Activated T-helper 1 cell treated with anti-CD3 and anti-CD28 coated beads, Interleukin-12 subunit alpha, Interleukin-12 subunit beta, Interleukin-2, Interleukin-4 antibody, amounts not matched to agents 30 ng/mL and 10 ng/mL and 1 ng/mL, durations not matched to agents 14 hours and 24 hours and 36 hours (primary cell): ENCODE measurements at regions of chr18 and their contacts with region 1.

Region 1: DNA sequence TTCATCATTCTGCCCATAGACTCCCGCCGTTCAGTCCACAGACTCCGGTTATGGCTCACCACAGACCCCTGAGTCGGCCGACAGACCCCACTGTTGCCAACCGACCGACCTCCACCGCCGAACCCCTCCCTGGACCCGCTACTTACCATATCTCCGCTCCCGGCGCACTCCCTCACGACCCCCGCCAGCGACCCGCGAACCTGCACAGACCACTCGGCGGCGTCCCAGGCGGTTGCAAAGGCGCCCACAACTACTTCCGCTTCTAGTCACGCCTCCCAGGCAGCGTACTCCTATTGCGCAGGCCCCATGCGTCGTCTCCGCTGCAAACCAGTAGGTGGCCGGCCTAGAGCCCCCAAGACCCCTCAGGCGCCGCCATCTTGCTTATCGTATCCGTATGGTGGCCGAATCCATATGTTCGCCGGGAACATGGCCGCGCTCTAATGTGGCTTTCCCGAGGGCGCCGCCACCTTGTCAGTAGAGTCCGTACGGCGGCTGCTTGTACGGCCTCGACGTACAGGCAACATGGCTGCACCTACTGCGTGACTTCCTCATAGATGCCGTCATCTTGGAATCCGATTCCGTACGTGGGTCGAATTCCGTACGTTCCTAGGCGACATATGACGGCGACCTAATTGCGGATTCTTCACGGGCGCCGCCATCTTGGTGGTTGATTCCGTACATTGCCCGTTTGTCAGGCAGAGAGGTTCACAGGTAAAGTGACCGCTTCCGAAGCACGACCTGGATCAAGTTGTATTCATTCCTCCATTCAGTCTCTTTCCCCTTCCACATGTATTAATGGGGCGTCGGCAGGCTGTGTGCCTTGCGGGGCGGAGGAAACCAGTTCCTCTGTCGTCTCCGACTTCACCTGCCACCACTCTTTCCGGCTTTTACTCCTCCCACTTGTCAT is at the start of gene CXXC1:
- DNase-seq: peak; percentile 95
- H3K4me3 Mint-ChIP-seq: peak within 1 kb of the TSS; percentile 93
- H3K27ac Mint-ChIP-seq: peak within 1 kb of the TSS; percentile 97
- H3K4me1 Mint-ChIP-seq: peaks cover 31% of the 10 kb centered on the region
- H3K27me3 Mint-ChIP-seq: no peaks in the 10 kb centered on the region
- total RNA-seq, gene CXXC1: 114 and 117 TPM in 2 replicates

Region 2: GRCh38 chr18:48951448-48952286 is 1336.0 kb before region 1 on chr18:
- intact Hi-C with region 1: loop called (anchors 10 kb)
- DNase-seq: peak; percentile 68
- H3K4me3 Mint-ChIP-seq: peak overlapping the region; percentile 98
- H3K27ac Mint-ChIP-seq: peak overlapping the region; percentile 96
- H3K4me1 Mint-ChIP-seq: peaks cover 45% of the 10 kb centered on the region
- H3K27me3 Mint-ChIP-seq: peaks cover 14% of the 10 kb centered on the region

Region 3: DNA sequence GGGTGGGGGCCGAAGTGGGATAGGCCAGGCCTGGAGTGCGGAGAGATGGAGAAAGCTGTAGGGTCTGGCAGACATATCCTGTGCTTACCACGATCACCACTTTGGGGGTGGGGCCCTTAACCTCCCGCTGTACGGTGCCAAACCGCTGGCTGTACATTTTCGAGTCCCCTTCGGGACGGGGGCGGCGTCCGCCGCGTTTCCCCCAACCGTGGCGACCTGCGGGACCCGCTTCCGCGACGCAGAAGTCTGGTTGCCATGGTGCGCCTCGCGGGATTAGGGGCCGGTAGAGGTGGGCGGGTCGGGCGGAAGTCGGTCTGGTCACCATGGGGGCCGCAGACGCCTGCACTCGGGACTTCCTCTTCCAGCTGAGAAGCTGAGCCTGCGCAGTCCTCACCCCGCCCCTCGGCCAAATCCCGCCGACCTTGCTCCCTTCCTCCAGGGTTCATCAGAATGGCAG is 21.4 kb before region 1 on chr18 and contains the start of gene CFAP53:
- intact Hi-C with region 1: loop called (anchors 1 kb)
- DNase-seq: peak; percentile 77
- H3K4me3 Mint-ChIP-seq: peak within 1 kb of the TSS; percentile 86
- H3K27ac Mint-ChIP-seq: peak within 1 kb of the TSS; percentile 70
- H3K4me1 Mint-ChIP-seq: peaks cover 30% of the 10 kb centered on the region
- H3K27me3 Mint-ChIP-seq: peaks cover 3% of the 10 kb centered on the region
- total RNA-seq, gene CFAP53: 0.31 and 0.34 TPM in 2 replicates

Region 4: GRCh38 chr18:50307738-50308470 is 20.2 kb after region 1 on chr18:
- intact Hi-C with region 1: loop called (anchors 1 kb)
- DNase-seq: peak; percentile 85
- H3K4me3 Mint-ChIP-seq: peak overlapping the region; percentile 90
- H3K27ac Mint-ChIP-seq: peak overlapping the region; percentile 57
- H3K4me1 Mint-ChIP-seq: peaks cover 18% of the 10 kb centered on the region
- H3K27me3 Mint-ChIP-seq: peaks cover 27% of the 10 kb centered on the region

Region 5: DNA sequence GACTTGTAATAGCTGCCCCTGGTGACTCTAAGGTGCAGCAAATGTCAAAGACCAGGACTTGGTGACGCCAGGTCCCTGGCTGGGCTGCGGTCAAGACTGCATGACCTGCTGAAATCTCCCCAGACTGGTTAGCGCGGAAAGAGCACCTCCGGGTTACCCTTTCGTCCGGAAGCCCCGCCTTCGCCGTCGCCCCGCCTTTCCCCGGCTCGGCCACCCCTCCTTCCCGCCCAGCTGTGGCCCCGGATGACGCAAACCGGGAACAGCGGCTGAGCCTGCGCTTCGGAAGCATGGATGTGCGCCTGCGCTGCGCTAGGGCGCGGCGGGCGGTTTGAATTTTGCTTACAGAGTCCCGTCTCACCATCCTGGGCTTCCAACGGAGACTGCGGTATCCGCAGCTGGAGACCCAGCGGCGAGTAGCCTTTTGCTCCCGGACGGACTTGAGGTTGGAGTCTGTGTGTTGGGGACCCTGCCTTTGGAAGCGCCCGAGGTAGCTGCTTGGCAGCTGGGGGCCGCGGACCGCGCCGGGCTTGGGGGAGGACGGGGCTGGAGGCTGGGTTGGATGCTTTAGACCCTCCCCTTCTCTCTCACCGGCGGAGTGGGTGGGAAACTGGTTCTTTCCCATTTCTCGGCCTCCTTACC is 87.2 kb after region 1 on chr18 and contains the start of gene SKA1:
- intact Hi-C with region 1: loop called (anchors 1 kb)
- DNase-seq: peak; percentile 89
- H3K4me3 Mint-ChIP-seq: peak within 1 kb of the TSS; percentile 91
- H3K27ac Mint-ChIP-seq: peak within 1 kb of the TSS; percentile 81
- H3K4me1 Mint-ChIP-seq: peaks cover 23% of the 10 kb centered on the region
- H3K27me3 Mint-ChIP-seq: peaks cover 2% of the 10 kb centered on the region
- total RNA-seq, gene SKA1: 20.7 and 23.3 TPM in 2 replicates

Region 6: GRCh38 chr18:51029694-51030536 is 742.2 kb after region 1 on chr18 and contains the start of gene SMAD4:
- intact Hi-C with region 1: loop called (anchors 10 kb)
- DNase-seq: peak; percentile 97
- H3K4me3 Mint-ChIP-seq: peak within 1 kb of the TSS; percentile 99
- H3K27ac Mint-ChIP-seq: peak within 1 kb of the TSS; percentile 96
- H3K4me1 Mint-ChIP-seq: peaks cover 55% of the 10 kb centered on the region
- H3K27me3 Mint-ChIP-seq: no peaks in the 10 kb centered on the region
- total RNA-seq, gene SMAD4: 84.4 and 88.7 TPM in 2 replicates